Vagina (tissue), 2 donors: ENCODE measurements at regions of chr5 and their contacts with region 1.

Region 1: GRCh38 chr5:137743031-137743640 is 7.2 kb upstream of the KLHL3 start:
- DNase-seq: no peak
- H3K4me3 ChIP-seq: no peak overlapping the region
- H3K27ac ChIP-seq: no peak overlapping the region
- H3K4me1 ChIP-seq: no peaks in the 10 kb centered on the region
- H3K27me3 ChIP-seq: no peaks in the 10 kb centered on the region
- CTCF ChIP-seq: peak in 2 of 3 experiments; percentile 25 to 57
- POLR2A ChIP-seq: no peak

Region 2: DNA sequence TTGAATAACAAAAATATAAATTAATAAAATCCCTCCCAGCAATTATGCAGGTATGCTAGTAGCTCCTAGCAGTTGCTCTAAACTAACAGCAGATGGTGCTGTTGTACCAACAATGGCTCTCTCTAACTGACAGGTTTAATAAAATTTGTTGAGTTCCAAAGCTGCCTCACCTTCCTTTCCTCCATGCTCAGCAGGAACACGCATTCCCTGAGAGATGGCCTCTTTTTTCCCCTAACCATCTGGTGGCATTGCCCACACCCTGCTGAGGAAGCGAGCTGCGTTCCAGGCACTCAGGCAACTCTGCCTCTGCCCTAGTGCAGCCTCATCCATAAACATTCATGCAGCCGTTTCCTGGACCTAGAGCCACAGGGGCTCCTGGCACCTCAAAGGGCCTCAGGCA is 113.5 kb before region 1 on chr5:
- intact Hi-C with region 1: loop called (anchors 5 kb)
- DNase-seq: no peak
- H3K4me3 ChIP-seq: no peak overlapping the region
- H3K27ac ChIP-seq: peak overlapping the region; percentile 15
- H3K4me1 ChIP-seq: peaks cover 17% of the 10 kb centered on the region
- H3K27me3 ChIP-seq: no peaks in the 10 kb centered on the region
- CTCF ChIP-seq: peak; percentile 89 to 98 (median 92)
- POLR2A ChIP-seq: no peak

Region 3: DNA sequence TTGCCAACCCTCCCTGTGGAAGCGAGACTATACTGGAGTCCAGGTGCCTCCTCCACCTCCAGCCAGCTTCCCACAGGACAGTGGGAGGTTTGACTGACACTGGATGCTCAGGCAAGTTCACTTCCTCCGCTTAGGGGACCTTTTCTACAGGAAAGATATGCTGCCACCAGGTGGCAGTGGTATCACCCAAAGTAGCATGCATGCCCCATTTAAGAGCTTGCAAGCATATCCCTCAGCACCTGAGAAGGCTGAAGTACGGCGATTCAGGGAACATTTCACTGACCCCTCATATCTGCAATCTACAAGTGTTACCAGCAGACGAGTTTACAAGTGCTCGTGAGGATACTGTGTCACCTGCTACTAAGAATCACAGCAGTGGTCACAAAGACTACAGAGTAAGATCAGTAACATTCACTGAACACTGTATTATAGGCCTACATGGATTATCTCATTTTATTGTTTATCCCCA is 82.8 kb before region 1 on chr5:
- intact Hi-C with region 1: loop called (anchors 5 kb)
- DNase-seq: no peak
- H3K4me3 ChIP-seq: no peak overlapping the region
- H3K27ac ChIP-seq: peak overlapping the region; percentile 11
- H3K4me1 ChIP-seq: peaks cover 7% of the 10 kb centered on the region
- H3K27me3 ChIP-seq: no peaks in the 10 kb centered on the region
- CTCF ChIP-seq: peak; percentile 61 to 73 (median 70)
- POLR2A ChIP-seq: no peak

Region 4: GRCh38 chr5:137888857-137889759 is 146.0 kb after region 1 on chr5 and contains the start of gene PKD2L2:
- intact Hi-C with region 1: no loop called
- DNase-seq: no peak
- H3K4me3 ChIP-seq: peak within 1 kb of the TSS; percentile 41
- H3K27ac ChIP-seq: peak within 1 kb of the TSS; percentile 78
- H3K4me1 ChIP-seq: peaks cover 25% of the 10 kb centered on the region
- H3K27me3 ChIP-seq: no peaks in the 10 kb centered on the region
- CTCF ChIP-seq: peak in 1 of 3 experiments; percentile 9
- POLR2A ChIP-seq: no peak
- total RNA-seq, gene PKD2L2: not detected